HCT116 (cell line): ENCODE measurements at regions of chr4 and their contacts with region 1.

Region 1: DNA sequence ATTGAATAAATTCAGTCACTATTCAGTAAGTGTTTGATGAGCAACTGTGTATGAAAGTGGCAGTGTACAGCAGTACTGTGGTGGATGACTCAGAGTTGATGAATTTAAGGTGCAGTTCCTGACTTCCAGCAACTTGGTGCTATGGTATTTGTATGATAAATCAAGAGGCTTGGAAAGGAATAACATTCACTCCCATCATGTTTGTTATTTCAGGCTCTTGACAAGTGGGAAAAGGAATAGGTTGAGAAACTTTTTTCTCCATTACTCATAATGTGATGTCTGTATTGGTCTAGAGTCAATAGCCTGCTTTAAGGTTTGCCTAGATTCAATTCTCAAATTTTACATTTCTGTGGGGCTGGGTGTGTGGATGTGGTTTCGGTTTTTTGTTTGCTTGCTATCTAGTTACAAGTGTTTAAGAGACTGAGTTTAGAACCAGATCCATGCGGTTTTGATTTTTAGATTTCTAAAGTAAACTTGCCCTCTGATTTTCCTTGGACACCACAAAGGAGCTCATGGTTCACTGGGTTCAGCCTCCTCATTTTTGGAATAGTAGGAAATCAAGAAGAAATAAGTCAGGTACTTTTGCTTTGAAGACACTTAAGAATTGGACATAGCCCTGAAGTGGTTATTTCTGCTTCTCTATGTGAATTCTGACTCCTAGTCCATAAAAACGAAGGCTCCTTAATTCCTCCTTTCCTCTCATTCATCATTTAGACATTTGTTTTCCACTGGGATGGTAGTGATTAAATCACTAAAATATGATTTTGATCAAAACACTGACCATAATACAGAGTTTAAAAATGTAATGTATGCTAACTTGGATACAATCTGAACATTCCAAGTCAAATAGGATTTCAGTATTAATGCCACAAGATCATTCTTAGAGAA is 34.9 kb upstream of the CYP2U1 start:
- DNase-seq: peak; percentile 92
- ATAC-seq: peak; percentile 98
- H3K4me3 ChIP-seq: peak overlapping the region; percentile 10 to 36; a peak in 3 of 4 replicates
- H3K27ac ChIP-seq: peak overlapping the region; percentile 64
- H3K4me1 ChIP-seq: peaks cover 18 to 34% of the 10 kb centered on the region in 2 experiments
- H3K27me3 ChIP-seq: no peaks in the 10 kb centered on the region
- CTCF ChIP-seq: no peak
- POLR2A ChIP-seq: no peak
- RAD21 ChIP-seq: no peak

Region 2: DNA sequence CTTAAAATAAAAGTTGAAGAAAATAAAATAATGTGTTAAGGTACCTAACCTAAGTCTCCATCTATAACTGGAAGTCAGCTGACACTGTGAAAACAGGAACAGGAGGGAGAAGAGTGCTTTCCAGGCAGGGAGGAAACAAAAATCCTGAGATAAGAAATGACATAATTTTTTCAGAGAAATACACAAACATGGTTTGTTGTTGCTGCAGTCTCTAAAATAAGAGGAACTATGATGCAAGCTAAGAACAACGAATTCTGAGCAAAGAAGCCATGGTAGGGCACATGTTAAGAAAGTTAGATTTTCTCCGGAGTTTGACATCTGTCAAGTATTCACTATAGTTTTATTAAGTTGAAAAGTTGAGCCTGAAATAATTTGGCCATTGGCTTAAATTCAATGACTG is 203.3 kb before region 1 on chr4:
- CTCF ChIA-PET with region 1: no interaction called
- POLR2A ChIA-PET with region 1: no interaction called
- RAD21 ChIA-PET with region 1: no interaction called
- intact Hi-C with region 1: no loop called
- DNase-seq: no peak
- ATAC-seq: no peak
- H3K4me3 ChIP-seq: no peak overlapping the region
- H3K27ac ChIP-seq: no peak overlapping the region
- H3K4me1 ChIP-seq: peaks cover 6 to 19% of the 10 kb centered on the region in 2 experiments
- H3K27me3 ChIP-seq: no peaks in the 10 kb centered on the region
- CTCF ChIP-seq: no peak
- POLR2A ChIP-seq: no peak
- RAD21 ChIP-seq: no peak

Region 3: GRCh38 chr4:107824353-107825071 is 71.9 kb before region 1 on chr4 and contains the start of gene SGMS2:
- CTCF ChIA-PET with region 1: no interaction called
- POLR2A ChIA-PET with region 1: no interaction called
- RAD21 ChIA-PET with region 1: no interaction called
- intact Hi-C with region 1: loop called (anchors 2 kb)
- DNase-seq: peak; percentile 88
- ATAC-seq: peak; percentile 85
- H3K4me3 ChIP-seq: peak within 1 kb of the TSS; percentile 66 to 70
- H3K27ac ChIP-seq: peak within 1 kb of the TSS; percentile 91
- H3K4me1 ChIP-seq: peaks cover 17 to 35% of the 10 kb centered on the region in 2 experiments
- H3K27me3 ChIP-seq: no peaks in the 10 kb centered on the region
- CTCF ChIP-seq: no peak
- POLR2A ChIP-seq: peak; percentile 72
- RAD21 ChIP-seq: no peak
- total RNA-seq, gene SGMS2: 36.6 TPM